A549 (cell line): ENCODE measurements at regions of chr1 and their contacts with region 1.

Region 1: GRCh38 chr1:9724706-9725476 is 73.4 kb downstream of the PIK3CD start:
- DNase-seq: peak; percentile 57 to 67
- ATAC-seq: peak; percentile 80 to 88
- H3K4me3 ChIP-seq: no peak overlapping the region
- H3K27ac ChIP-seq: peak overlapping the region in 1 of 2 experiments; percentile 36; a peak in 1 of 6 replicates
- H3K4me1 ChIP-seq: peaks cover 2% of the 10 kb centered on the region
- CTCF ChIP-seq: peak; percentile 55
- EP300 ChIP-seq: no peak
- POLR2A ChIP-seq: no peak
- RAD21 ChIP-seq: peak; percentile 42 to 61

Region 2: GRCh38 chr1:9705337-9706093 is 19.4 kb before region 1 on chr1:
- CTCF ChIA-PET with region 1: interaction called, 12 read pairs
- POLR2A ChIA-PET with region 1: no interaction called
- DNase-seq: no peak
- ATAC-seq: no peak
- H3K4me3 ChIP-seq: no peak overlapping the region
- H3K27ac ChIP-seq: no peak overlapping the region
- H3K4me1 ChIP-seq: peaks cover 7% of the 10 kb centered on the region
- CTCF ChIP-seq: no peak
- EP300 ChIP-seq: no peak
- POLR2A ChIP-seq: no peak
- RAD21 ChIP-seq: no peak